IMR-90 (cell line): ENCODE measurements at regions of chr3 and their contacts with region 1.

Region 1: GRCh38 chr3:102229062-102229655 is 205.7 kb upstream of the ZPLD1 start:
- DNase-seq: peak; percentile 62
- ATAC-seq: peak; percentile 87
- H3K4me3 ChIP-seq: no peak overlapping the region
- H3K27ac ChIP-seq: no peak overlapping the region
- H3K4me1 ChIP-seq: no peaks in the 10 kb centered on the region
- H3K27me3 ChIP-seq: peaks cover 11% of the 10 kb centered on the region
- CTCF ChIP-seq: peak; percentile 91
- POLR2A ChIP-seq: no peak
- RAD21 ChIP-seq: peak; percentile 80

Region 2: GRCh38 chr3:101319531-101319930 is 909.6 kb before region 1 on chr3:
- CTCF ChIA-PET with region 1: no interaction called
- POLR2A ChIA-PET with region 1: no interaction called
- dilution Hi-C with region 1: no loop called
- in situ Hi-C with region 1: no loop called
- intact Hi-C with region 1: no loop called
- DNase-seq: no peak
- ATAC-seq: no peak
- H3K4me3 ChIP-seq: no peak overlapping the region
- H3K27ac ChIP-seq: no peak overlapping the region
- H3K4me1 ChIP-seq: no peaks in the 10 kb centered on the region
- H3K27me3 ChIP-seq: no peaks in the 10 kb centered on the region
- CTCF ChIP-seq: no peak
- POLR2A ChIP-seq: no peak
- RAD21 ChIP-seq: no peak

Region 3: DNA sequence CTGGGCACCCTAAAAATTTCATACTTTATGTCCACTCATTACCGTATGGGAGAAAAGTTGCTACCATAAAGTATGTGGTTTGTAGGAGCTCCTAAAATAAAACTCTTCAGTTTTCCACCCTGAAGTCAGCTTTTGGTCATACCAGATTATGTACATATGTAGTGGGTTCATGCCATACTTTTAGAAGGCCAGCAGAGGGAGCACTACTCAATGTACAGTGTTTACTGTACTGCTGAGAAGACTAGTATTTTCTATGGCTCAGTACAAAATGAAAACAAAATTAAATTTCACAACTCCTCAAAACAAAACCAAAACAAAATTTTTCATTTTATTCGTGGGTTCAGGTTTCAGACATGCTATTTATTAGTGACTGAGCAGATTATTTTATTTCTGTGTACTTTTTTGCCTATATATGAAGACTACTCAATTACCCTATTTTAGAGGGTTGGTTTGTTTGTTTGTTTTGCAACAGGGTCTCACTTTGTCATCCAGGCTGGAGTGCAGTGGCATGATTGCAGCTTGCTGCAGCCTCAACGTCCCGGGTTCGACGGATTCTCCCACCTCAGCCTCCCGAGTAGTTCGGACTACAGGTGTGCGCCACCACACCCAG is 425.9 kb before region 1 on chr3:
- CTCF ChIA-PET with region 1: interaction called, 81 read pairs
- POLR2A ChIA-PET with region 1: no interaction called
- dilution Hi-C with region 1: no loop called
- in situ Hi-C with region 1: no loop called
- intact Hi-C with region 1: no loop called
- DNase-seq: peak; percentile 79
- ATAC-seq: peak; percentile 99
- H3K4me3 ChIP-seq: no peak overlapping the region
- H3K27ac ChIP-seq: no peak overlapping the region
- H3K4me1 ChIP-seq: no peaks in the 10 kb centered on the region
- H3K27me3 ChIP-seq: no peaks in the 10 kb centered on the region
- CTCF ChIP-seq: peak; percentile 78
- POLR2A ChIP-seq: no peak
- RAD21 ChIP-seq: peak; percentile 46

Region 4: DNA sequence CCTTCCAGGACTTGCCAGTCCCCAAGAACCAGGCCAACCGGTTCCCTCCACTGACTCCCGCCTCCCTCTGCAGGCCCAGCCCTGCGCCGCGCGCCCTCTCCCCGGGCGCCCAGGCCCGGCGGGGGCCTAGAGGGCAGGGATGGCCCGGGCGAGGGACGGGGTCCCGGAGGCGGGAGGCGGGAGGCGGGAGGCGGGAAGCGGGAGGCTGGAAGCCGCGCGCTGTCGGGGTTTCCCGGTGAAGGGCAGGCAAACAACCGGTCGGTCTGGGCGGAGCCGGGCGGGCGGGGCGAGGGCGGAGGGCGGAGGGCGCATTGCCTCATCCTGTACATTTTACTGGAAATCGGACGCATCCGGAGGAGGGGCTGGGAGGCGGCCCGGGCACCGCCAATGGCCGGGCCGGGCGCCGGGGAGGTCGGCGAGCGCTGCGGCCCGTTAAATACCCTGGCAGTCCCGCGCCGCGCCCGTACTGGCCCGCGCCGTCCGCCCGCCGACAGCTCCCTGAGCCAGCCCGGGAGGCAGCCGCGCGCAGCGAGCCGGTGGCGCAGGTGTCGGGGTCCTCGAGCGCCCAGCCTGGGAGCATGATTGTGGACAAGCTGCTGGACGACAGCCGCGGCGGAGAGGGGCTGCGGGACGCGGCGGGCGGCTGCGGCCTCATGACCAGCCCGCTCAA is 380.0 kb before region 1 on chr3 and contains the start of gene NFKBIZ:
- CTCF ChIA-PET with region 1: interaction called, 8 read pairs
- POLR2A ChIA-PET with region 1: interaction called, 3 read pairs
- dilution Hi-C with region 1: no loop called
- in situ Hi-C with region 1: no loop called
- intact Hi-C with region 1: loop called (anchors 1 kb)
- DNase-seq: peak; percentile 91
- ATAC-seq: peak; percentile 91
- H3K4me3 ChIP-seq: peak within 1 kb of the TSS; percentile 96
- H3K27ac ChIP-seq: peak within 1 kb of the TSS; percentile 96
- H3K4me1 ChIP-seq: peaks cover 12% of the 10 kb centered on the region
- H3K27me3 ChIP-seq: no peaks in the 10 kb centered on the region
- CTCF ChIP-seq: no peak
- POLR2A ChIP-seq: peak; percentile 100
- RAD21 ChIP-seq: no peak; the same call in 1 of the 2 replicates
- total RNA-seq, gene NFKBIZ: 35.0 and 43.0 TPM in 2 replicates

Region 5: GRCh38 chr3:102156426-102156825 is 72.7 kb before region 1 on chr3:
- CTCF ChIA-PET with region 1: no interaction called
- POLR2A ChIA-PET with region 1: no interaction called
- dilution Hi-C with region 1: no loop called
- in situ Hi-C with region 1: no loop called
- intact Hi-C with region 1: no loop called
- DNase-seq: peak; percentile 95
- ATAC-seq: peak; percentile 88
- H3K4me3 ChIP-seq: no peak overlapping the region
- H3K27ac ChIP-seq: peak overlapping the region; percentile 20; the same call in 1 of the 2 replicates
- H3K4me1 ChIP-seq: peaks cover 5% of the 10 kb centered on the region
- H3K27me3 ChIP-seq: no peaks in the 10 kb centered on the region
- CTCF ChIP-seq: no peak
- POLR2A ChIP-seq: no peak
- RAD21 ChIP-seq: no peak

Region 6: DNA sequence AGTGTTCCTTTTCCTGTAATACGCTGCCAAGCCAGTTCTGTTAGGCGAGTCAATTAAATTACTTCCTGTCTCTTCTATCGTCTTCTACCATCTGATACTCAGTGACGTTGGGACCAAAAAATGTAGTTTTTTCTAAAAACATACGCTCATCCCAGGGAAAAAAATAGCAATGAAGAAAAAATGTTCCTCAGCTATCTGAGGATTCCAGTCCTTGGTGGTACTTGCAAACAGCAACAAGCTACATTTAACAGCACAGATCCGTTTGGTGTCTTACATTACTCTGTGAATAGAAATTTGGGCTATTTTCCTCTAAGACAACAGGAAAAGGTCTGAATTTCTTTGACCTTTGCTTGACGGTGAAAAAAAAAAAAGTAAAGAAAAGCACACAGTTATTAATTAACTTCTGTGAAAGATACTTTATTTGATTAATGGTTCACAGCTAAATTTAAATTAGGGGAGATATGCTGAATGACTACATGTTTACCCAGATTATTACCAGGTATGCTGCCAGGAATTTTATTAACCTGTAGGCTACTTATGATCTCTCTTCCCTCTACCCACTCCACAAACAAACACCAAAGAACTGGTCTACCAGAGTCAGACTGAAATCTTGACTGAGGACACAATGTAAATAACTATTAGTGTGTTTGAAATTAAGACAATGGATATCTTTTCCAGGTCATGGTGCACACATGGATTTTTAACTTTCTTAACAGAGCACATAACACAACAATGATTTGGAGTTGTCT is 48.7 kb before region 1 on chr3:
- CTCF ChIA-PET with region 1: interaction called, 8 read pairs
- POLR2A ChIA-PET with region 1: no interaction called
- dilution Hi-C with region 1: no loop called
- in situ Hi-C with region 1: no loop called
- intact Hi-C with region 1: loop called (anchors 2 kb)
- DNase-seq: peak; percentile 95
- ATAC-seq: peak; percentile 71
- H3K4me3 ChIP-seq: no peak overlapping the region
- H3K27ac ChIP-seq: peak overlapping the region; percentile 84; the same call in 1 of the 2 replicates
- H3K4me1 ChIP-seq: peaks cover 20% of the 10 kb centered on the region
- H3K27me3 ChIP-seq: no peaks in the 10 kb centered on the region
- CTCF ChIP-seq: no peak
- POLR2A ChIP-seq: peak; percentile 78; the same call in 1 of the 2 replicates
- RAD21 ChIP-seq: no peak

Region 7: GRCh38 chr3:102299125-102299877 is 70.1 kb after region 1 on chr3:
- CTCF ChIA-PET with region 1: no interaction called
- POLR2A ChIA-PET with region 1: no interaction called
- dilution Hi-C with region 1: no loop called
- in situ Hi-C with region 1: no loop called
- intact Hi-C with region 1: no loop called
- DNase-seq: no peak
- ATAC-seq: no peak
- H3K4me3 ChIP-seq: no peak overlapping the region
- H3K27ac ChIP-seq: no peak overlapping the region
- H3K4me1 ChIP-seq: no peaks in the 10 kb centered on the region
- H3K27me3 ChIP-seq: peaks cover 1% of the 10 kb centered on the region; the same call in 1 of the 2 replicates
- CTCF ChIP-seq: no peak
- POLR2A ChIP-seq: no peak
- RAD21 ChIP-seq: no peak

Region 8: DNA sequence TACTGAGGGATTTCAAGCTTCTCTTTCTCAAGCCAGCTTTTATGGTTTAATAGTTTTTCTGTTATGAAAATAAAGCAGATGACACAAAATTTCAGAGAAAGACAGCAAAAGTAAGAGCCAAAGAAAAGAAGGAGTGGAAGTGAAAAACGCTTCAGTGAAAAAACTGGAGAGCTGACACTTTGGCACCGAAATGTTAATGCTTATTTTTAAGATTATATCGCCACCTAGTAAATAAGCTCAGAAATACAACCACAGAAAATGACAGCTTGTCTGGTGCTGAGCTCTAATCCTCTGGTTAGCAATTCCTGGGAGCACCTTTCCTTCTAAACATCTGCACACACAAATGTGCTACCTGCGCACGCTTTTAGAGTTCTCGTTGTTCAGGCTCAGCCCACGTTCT is 307.3 kb after region 1 on chr3:
- CTCF ChIA-PET with region 1: interaction called, 60 read pairs
- POLR2A ChIA-PET with region 1: no interaction called
- dilution Hi-C with region 1: loop called (anchors 25 kb)
- in situ Hi-C with region 1: loop called (anchors 5 kb)
- intact Hi-C with region 1: loop called (anchors 1 kb)
- DNase-seq: peak; percentile 33
- ATAC-seq: peak; percentile 54; the same call in 1 of the 2 replicates
- H3K4me3 ChIP-seq: no peak overlapping the region
- H3K27ac ChIP-seq: no peak overlapping the region
- H3K4me1 ChIP-seq: no peaks in the 10 kb centered on the region
- H3K27me3 ChIP-seq: no peaks in the 10 kb centered on the region
- CTCF ChIP-seq: peak; percentile 55
- POLR2A ChIP-seq: no peak
- RAD21 ChIP-seq: peak; percentile 59